ENCODE measurements at regions of chr1 and their contacts with region 1.

Region 1: GRCh38 chr1:232630047-232630893 is at the start of gene SIPA1L2:
- DNase-seq: peak; percentile 87
- H3K4me3 Mint-ChIP-seq: peak within 1 kb of the TSS; percentile 90
- H3K27ac Mint-ChIP-seq: peak within 1 kb of the TSS; percentile 61
- H3K4me1 Mint-ChIP-seq: peaks cover 38% of the 10 kb centered on the region
- H3K27me3 Mint-ChIP-seq: peaks cover 49% of the 10 kb centered on the region
- total RNA-seq, gene SIPA1L2: 2.3 and 2.6 TPM in 2 replicates

Region 2: GRCh38 chr1:232110281-232111090 is 519.8 kb before region 1 on chr1:
- intact Hi-C with region 1: no loop called
- DNase-seq: no peak
- H3K4me3 Mint-ChIP-seq: no peak overlapping the region
- H3K27ac Mint-ChIP-seq: no peak overlapping the region
- H3K4me1 Mint-ChIP-seq: no peaks in the 10 kb centered on the region
- H3K27me3 Mint-ChIP-seq: peaks cover 17% of the 10 kb centered on the region

Region 3: GRCh38 chr1:232457595-232457994 is 172.7 kb before region 1 on chr1:
- intact Hi-C with region 1: loop called (anchors 5 kb)
- DNase-seq: peak; percentile 11
- H3K4me3 Mint-ChIP-seq: no peak overlapping the region
- H3K27ac Mint-ChIP-seq: no peak overlapping the region
- H3K4me1 Mint-ChIP-seq: peaks cover 16% of the 10 kb centered on the region
- H3K27me3 Mint-ChIP-seq: no peaks in the 10 kb centered on the region

Region 4: DNA sequence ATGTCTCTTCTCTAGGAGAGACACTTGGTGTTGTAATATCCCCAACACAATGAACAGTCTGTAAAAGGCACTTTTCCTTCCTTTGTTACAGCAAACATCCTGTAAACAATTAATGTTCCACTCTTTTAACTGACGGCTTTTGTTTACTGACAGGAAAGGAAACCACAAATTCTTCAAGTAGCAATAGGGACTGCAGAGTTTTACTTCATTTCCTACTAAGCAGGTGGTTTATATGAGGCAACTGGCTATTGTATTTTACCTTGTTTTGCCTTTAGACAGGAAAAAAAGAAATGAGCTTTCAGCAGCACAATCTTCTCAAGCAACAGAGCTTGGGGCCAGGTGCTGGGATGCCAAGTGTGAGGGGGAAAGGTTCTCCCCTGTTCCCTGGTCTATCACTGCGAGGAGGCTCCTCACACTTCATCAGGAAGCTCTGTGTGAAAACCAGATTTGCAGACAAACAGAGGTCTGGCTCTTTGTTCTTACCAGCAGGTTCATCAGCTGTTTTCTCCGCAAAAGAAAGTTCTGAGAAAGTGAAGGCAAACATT is 51.5 kb before region 1 on chr1:
- intact Hi-C with region 1: loop called (anchors 2 kb)
- DNase-seq: peak; percentile 23
- H3K4me3 Mint-ChIP-seq: peak overlapping the region; percentile 64
- H3K27ac Mint-ChIP-seq: peak overlapping the region; percentile 79
- H3K4me1 Mint-ChIP-seq: peaks cover 63% of the 10 kb centered on the region
- H3K27me3 Mint-ChIP-seq: no peaks in the 10 kb centered on the region

Region 5: GRCh38 chr1:232805269-232806185 is 175.3 kb after region 1 on chr1 and contains the start of gene MAP10:
- intact Hi-C with region 1: loop called (anchors 2 kb)
- DNase-seq: peak; percentile 74
- H3K4me3 Mint-ChIP-seq: peak within 1 kb of the TSS; percentile 89
- H3K27ac Mint-ChIP-seq: peak within 1 kb of the TSS; percentile 88
- H3K4me1 Mint-ChIP-seq: peaks cover 31% of the 10 kb centered on the region
- H3K27me3 Mint-ChIP-seq: peaks cover 9% of the 10 kb centered on the region
- total RNA-seq, gene MAP10: 3.3 and 3.4 TPM in 2 replicates

Region 6: DNA sequence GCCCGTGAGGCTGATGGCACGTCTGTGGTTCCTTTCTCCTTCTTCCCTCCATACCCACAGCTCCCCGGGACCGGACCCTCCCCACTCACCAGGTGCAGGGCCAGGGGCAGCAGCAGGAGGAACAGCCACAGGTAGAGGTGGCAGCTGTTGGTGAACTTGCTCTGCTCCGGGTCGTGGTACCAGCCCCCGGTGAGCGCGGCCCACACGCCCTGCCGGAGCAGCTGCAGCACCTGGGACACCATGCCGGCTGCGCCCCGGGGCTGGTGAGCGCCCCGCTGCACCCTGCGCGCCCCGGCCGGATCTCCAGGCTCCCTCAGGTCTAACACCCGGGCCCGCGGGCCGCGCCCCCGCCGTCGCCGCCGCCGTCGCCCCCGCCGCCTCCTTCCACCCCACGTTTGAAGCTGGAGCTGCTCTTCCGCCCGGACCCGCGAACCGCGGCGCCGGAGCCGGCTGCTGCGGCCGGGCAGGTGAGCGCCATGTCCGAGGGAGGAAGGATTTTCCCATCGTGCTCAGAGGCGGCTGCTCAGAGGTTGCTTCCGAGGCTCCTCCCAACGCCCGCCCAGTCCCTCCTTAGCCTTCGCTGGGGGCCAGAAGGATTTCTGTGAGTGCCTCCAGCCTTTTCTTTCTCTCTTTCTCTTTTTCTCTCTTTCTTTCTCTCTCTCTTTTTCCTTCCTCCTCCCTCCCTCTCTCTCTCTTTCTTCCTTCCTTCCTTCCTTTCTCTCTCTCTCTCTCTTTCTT is 665.1 kb after region 1 on chr1 and contains the start of gene PCNX2:
- intact Hi-C with region 1: loop called (anchors 10 kb)
- DNase-seq: peak; percentile 54
- H3K4me3 Mint-ChIP-seq: peak within 1 kb of the TSS; percentile 94
- H3K27ac Mint-ChIP-seq: peak within 1 kb of the TSS; percentile 86
- H3K4me1 Mint-ChIP-seq: peaks cover 37% of the 10 kb centered on the region
- H3K27me3 Mint-ChIP-seq: no peaks in the 10 kb centered on the region
- total RNA-seq, gene PCNX2: 33.1 and 33.7 TPM in 2 replicates